ENCODE measurements at regions of chr9 and their contacts with region 1.

Region 1: DNA sequence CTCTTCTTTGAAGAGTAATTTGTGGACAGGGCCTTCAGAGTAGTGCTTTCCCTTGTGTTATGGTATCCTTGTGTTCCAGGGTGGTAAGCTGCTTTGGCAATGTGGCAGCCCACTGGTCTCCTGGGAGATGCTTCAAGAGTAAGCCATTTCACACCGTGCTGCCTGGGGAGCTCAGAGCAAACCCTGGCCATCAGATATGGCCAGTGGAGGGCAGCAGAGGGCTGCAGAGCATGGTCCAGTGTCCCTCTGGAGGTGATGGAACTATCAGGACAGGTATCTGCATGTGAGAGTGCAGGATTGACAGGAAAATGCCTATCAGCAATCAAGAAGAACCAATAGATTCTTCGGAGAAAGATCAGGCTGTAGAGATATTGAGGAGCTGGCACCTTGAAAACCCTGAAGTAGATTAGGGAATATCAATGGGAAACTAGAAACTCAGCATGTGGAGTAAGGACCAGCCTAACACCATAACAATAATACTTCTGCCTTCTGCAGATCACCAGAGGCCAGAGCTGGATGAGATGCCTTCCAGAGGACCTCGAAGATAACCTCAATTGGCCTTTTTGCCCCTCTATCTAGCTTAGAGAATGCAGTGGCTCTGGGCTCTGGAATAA is 90.8 kb downstream of the PLPPR1 start:
- DNase-seq: peak; percentile 57
- ATAC-seq: peak; percentile 100
- H3K4me3 ChIP-seq: no peak overlapping the region
- H3K27ac ChIP-seq: no peak overlapping the region
- H3K4me1 ChIP-seq: peaks cover 6% of the 10 kb centered on the region; the same call in 1 of the 2 replicates
- H3K27me3 ChIP-seq: no peaks in the 10 kb centered on the region
- CTCF ChIP-seq: peak; percentile 99
- EP300 ChIP-seq: no peak
- POLR2A ChIP-seq: no peak
- RAD21 ChIP-seq: peak; percentile 95

Region 2: DNA sequence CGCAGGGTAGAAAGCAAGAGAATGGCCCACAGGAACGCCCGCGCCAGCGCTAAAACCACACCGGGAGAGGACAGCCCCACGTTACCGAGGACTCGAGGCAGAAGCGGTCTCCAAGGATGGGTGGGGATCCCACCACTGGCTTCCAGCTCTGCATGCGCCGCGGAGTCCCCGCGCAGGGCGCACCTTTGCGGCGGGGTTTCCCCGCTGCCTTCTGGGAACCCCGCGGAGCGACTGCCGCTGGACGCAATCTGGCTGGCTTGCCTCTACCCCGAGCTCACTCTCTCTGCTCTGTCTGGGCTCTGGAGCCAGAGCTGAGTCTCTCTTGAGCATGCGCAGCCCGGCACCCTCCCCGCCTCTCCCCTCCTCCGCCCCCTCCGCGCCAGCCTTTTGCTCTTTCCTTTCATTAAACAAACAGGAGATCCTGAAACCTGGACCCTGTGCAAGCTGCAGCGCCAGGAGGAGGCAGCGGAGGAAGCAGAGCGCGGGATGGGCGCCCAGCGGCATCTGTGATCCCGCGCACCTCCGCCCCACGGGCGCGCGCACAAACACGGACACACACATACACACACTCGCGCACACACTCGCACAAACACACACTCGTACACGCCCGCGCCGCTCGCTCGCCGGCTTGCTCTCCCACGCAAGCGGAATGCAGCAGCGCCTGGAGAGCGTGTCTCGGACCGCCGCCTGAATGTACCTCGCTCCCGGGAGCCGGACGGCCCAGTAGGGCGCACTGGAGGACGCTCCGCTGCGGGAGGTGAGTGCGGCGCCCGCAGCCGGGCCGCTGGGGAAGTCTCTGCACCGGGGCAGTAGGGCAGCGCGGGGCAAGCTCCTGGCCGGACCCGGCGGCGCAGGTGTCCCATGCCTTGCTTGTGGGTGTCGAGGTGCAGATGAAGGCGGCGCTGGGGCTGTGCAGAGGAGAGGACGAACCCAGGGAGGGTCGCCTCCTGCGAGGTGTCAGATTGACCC is 90.7 kb before region 1 on chr9 and contains the start of gene PLPPR1:
- CTCF ChIA-PET with region 1: interaction called, 3 read pairs
- POLR2A ChIA-PET with region 1: no interaction called
- in situ Hi-C with region 1: no loop called
- intact Hi-C with region 1: loop called (anchors 5 kb)
- DNase-seq: peak; percentile 89
- ATAC-seq: peak; percentile 91
- H3K4me3 ChIP-seq: peak within 1 kb of the TSS; percentile 89 to 92 (median 91)
- H3K27ac ChIP-seq: peak within 1 kb of the TSS; percentile 77
- H3K4me1 ChIP-seq: peaks cover 38% of the 10 kb centered on the region
- H3K27me3 ChIP-seq: peaks cover 3 to 8% of the 10 kb centered on the region in 2 experiments; a peak in 3 of 5 replicates
- CTCF ChIP-seq: peak; percentile 54
- EP300 ChIP-seq: peak in 1 of 2 experiments; percentile 38; a peak in 1 of 4 replicates
- POLR2A ChIP-seq: peak; percentile 76 to 89
- RAD21 ChIP-seq: peak; percentile 20; the same call in 1 of the 2 replicates
- total RNA-seq, gene PLPPR1: 16.0 and 16.4 TPM in 2 replicates

Region 3: DNA sequence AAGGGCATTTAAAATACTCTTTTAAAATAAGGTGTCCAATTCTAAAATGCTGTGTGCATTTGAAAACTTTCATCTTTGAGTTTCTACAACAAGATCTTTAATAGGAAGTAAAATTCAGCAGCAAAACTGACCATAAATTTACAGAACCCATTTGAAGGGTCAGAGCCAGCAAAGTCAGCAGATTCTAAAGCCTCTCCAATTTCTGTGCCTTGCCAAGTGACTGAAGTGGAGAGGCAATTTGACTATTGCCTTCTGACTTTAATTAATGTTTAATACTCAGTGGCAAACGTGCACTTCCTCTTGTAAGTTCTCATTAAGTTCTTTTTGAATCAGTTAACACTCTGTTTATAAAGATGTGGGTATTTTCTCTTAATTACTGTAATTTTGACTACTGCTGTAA is 110.3 kb after region 1 on chr9:
- CTCF ChIA-PET with region 1: interaction called, 38 read pairs
- POLR2A ChIA-PET with region 1: no interaction called
- in situ Hi-C with region 1: loop called (anchors 5 kb)
- intact Hi-C with region 1: no loop called
- DNase-seq: no peak
- ATAC-seq: no peak
- H3K4me3 ChIP-seq: no peak overlapping the region
- H3K27ac ChIP-seq: no peak overlapping the region
- H3K4me1 ChIP-seq: peaks cover 34% of the 10 kb centered on the region
- H3K27me3 ChIP-seq: no peaks in the 10 kb centered on the region
- CTCF ChIP-seq: no peak
- EP300 ChIP-seq: no peak
- POLR2A ChIP-seq: no peak
- RAD21 ChIP-seq: no peak

Region 4: DNA sequence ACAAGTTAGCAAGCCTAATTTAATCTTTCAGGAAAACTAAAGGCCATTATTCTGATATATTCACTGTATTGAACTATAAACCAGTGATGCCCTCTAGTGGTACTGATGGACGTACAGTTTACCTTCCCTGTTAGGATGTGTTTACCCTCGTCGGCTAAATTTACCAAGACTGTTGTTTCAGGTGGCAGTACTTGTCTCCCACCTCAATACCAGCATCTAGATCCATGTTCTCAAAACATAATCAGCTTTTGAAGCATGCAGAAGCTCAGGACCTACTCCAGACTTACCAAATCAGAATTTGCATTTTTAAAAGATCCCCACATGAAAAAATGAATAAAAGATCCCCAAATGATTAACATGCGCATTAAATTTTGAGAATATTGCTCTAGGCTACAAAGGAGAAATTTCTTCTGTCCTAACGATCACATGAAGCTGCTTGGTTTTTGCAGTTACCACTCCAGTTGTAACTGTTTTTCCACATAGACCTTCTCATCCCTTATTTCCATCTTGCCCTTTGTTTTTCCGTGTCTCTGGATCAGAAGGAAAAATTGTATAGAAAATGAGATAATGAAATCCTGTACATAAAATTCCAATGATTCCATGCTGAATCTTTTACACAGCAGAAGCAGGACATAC is 268.7 kb after region 1 on chr9:
- CTCF ChIA-PET with region 1: interaction called, 3 read pairs
- POLR2A ChIA-PET with region 1: no interaction called
- in situ Hi-C with region 1: loop called (anchors 10 kb)
- intact Hi-C with region 1: loop called (anchors 1 kb)
- DNase-seq: peak; percentile 86
- ATAC-seq: peak; percentile 97
- H3K4me3 ChIP-seq: no peak overlapping the region
- H3K27ac ChIP-seq: peak overlapping the region; percentile 41
- H3K4me1 ChIP-seq: peaks cover 81% of the 10 kb centered on the region
- H3K27me3 ChIP-seq: no peaks in the 10 kb centered on the region
- CTCF ChIP-seq: peak; percentile 88
- EP300 ChIP-seq: peak in 1 of 2 experiments; percentile 58; a peak in 1 of 4 replicates
- POLR2A ChIP-seq: no peak
- RAD21 ChIP-seq: peak; percentile 81

Region 5: GRCh38 chr9:101566904-101567724 is 447.8 kb after region 1 on chr9:
- CTCF ChIA-PET with region 1: no interaction called
- POLR2A ChIA-PET with region 1: no interaction called
- in situ Hi-C with region 1: no loop called
- intact Hi-C with region 1: loop called (anchors 10 kb)
- DNase-seq: peak; percentile 48
- ATAC-seq: peak; percentile 76
- H3K4me3 ChIP-seq: no peak overlapping the region
- H3K27ac ChIP-seq: no peak overlapping the region
- H3K4me1 ChIP-seq: no peaks in the 10 kb centered on the region
- H3K27me3 ChIP-seq: no peaks in the 10 kb centered on the region
- CTCF ChIP-seq: peak; percentile 58
- EP300 ChIP-seq: no peak
- POLR2A ChIP-seq: no peak
- RAD21 ChIP-seq: no peak

Measured in HepG2 (cell line).